ENCODE measurements at regions of chr7 and their contacts with region 1.

Region 1: DNA sequence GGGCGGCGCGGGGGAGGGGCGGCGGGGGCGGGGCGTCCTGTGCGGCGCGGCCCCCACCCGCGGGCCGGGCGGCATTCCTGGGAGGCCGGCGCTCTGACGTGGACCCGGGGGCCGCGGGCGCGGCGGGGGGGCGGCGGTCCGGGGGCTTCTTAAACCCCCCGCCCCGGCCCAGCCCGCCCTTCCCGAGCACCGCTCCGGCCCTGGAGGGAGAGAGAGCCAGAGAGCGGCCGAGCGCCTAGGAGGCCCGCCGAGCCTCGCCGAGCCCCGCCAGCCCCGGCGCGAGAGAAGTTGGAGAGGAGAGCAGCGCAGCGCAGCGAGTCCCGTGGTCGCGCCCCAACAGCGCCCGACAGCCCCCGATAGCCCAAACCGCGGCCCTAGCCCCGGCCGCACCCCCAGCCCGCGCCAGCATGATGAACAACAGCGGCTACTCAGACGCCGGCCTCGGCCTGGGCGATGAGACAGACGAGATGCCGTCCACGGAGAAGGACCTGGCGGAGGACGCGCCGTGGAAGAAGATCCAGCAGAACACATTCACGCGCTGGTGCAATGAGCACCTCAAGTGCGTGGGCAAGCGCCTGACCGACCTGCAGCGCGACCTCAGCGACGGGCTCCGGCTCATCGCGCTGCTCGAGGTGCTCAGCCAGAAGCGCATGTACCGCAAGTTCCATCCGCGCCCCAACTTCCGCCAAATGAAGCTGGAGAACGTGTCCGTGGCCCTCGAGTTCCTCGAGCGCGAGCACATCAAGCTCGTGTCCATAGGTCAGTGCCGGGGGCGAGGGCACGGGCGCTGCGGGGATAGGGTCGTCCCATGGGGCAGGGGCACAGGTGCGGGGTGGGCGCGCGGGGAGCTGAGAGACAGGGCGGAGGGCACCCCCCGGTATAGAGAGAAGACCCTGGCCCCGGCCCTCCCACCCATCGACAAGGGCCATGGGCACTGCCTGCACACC is at the start of gene FLNC:
- DNase-seq: no peak
- CTCF ChIP-seq: no peak

Region 2: DNA sequence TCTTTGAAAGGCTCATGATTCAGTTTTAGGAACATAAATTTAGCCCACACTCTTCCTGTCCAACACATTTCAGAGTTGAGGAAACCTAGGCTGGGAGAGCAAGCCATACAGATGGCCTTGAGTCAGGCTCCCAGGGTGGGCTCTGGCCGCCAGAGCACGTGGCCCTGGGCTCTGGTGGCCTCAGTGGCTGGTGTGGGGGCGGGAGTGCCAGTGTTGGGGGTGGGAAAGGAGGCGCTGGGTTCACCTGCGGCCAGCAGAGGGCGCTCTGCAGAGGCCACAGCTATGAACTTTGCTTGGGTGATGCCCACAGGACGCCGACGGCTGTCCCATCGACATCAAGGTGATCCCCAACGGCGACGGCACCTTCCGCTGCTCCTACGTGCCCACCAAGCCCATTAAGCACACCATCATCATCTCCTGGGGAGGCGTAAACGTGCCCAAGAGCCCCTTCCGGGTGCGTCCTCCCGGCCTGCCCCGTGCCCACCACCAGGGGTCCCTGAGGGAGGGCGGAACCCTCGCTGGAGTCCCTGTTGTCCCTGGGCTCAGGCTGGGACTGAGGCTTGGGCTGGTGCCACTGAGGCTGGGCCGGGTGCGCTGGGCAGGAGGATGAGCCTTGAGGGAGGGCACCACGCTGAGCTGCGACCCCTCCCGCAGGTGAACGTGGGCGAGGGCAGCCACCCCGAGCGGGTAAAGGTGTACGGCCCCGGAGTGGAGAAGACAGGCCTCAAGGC is 11.6 kb after region 1 on chr7:
- CTCF ChIA-PET with region 1: interaction called, 38 read pairs
- POLR2A ChIA-PET with region 1: no interaction called
- DNase-seq: peak; percentile 88
- CTCF ChIP-seq: peak; percentile 69